ENCODE measurements at regions of chr17 and their contacts with region 1.

Region 1: GRCh38 chr17:39730095-39730921 is at the start of gene MIEN1:
- DNase-seq: peak; percentile 43
- ATAC-seq: peak; percentile 96
- H3K4me3 ChIP-seq: peak within 1 kb of the TSS; percentile 91
- H3K27ac ChIP-seq: peak within 1 kb of the TSS; percentile 88
- H3K4me1 ChIP-seq: peaks cover 3% of the 10 kb centered on the region; the same call in 1 of the 2 replicates
- H3K27me3 ChIP-seq: no peaks in the 10 kb centered on the region
- CTCF ChIP-seq: peak; percentile 71 to 90 (median 85)
- EP300 ChIP-seq: 0 out of 4 replicates have a peak, but pooled peaks of 1 of the 2 experiments have one; percentile 13
- POLR2A ChIP-seq: peak; percentile 98
- RAD21 ChIP-seq: peak; percentile 44
- polyA plus RNA-seq, gene MIEN1: 24.9 to 42.5 TPM

Region 2: GRCh38 chr17:39668199-39668966 is 61.9 kb before region 1 on chr17 and contains the start of gene PNMT:
- CTCF ChIA-PET with region 1: interaction called, 39 read pairs
- POLR2A ChIA-PET with region 1: no interaction called
- RAD21 ChIA-PET with region 1: interaction called, 8 read pairs
- SMC1A ChIA-PET with region 1: interaction called, 3 read pairs
- in situ Hi-C with region 1: no loop called
- intact Hi-C with region 1: no loop called
- DNase-seq: no peak
- ATAC-seq: peak; percentile 82
- H3K4me3 ChIP-seq: peak within 1 kb of the TSS; percentile 44; the same call in 1 of the 2 replicates
- H3K27ac ChIP-seq: no peak within 1 kb of the TSS
- H3K4me1 ChIP-seq: no peaks in the 10 kb centered on the region
- H3K27me3 ChIP-seq: peaks cover 4 to 6% of the 10 kb centered on the region in 2 experiments; a peak in 3 of 4 replicates
- CTCF ChIP-seq: peak; percentile 57 to 73 (median 62)
- EP300 ChIP-seq: no peak
- POLR2A ChIP-seq: no peak
- RAD21 ChIP-seq: 0 out of 2 replicates have a peak, but pooled peaks have one; percentile 17
- polyA plus RNA-seq, gene PNMT: not detected

Region 3: DNA sequence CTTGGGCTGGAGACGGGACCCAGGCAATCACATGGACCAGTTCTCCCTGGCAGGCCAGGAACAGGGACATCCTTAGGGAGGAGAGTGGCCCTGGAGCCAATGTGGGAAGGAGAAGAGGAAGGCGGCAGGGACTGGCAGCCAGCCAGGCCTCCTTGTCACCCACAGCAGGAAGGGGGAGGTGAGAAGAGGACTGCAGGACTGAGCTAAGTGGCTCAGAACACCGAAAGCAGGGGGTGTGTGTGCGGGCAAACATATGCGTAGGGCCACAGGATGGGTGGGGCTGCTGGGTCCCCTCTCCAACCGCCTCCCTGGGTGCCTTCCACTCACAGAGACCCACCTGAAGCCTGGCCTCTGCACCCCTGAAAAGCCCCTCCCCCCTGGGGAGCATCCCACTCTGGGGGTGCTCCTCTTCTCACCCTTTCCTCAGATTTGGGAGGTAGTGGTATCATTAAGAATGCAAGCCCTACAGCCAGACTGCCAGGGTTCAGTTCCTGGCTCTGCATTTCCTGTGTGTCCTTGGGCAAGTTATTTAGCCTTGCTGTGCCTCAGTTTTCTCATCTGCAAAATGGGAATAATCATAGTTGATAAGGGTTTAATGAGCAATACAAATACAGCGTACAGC is 54.0 kb before region 1 on chr17:
- CTCF ChIA-PET with region 1: interaction called, 39 read pairs
- POLR2A ChIA-PET with region 1: interaction called, 6 read pairs
- RAD21 ChIA-PET with region 1: interaction called, 8 read pairs
- SMC1A ChIA-PET with region 1: interaction called, 5 read pairs
- in situ Hi-C with region 1: no loop called
- intact Hi-C with region 1: no loop called
- DNase-seq: peak; percentile 13
- ATAC-seq: peak; percentile 83
- H3K4me3 ChIP-seq: no peak overlapping the region
- H3K27ac ChIP-seq: no peak overlapping the region
- H3K4me1 ChIP-seq: peaks cover 44% of the 10 kb centered on the region
- H3K27me3 ChIP-seq: no peaks in the 10 kb centered on the region
- CTCF ChIP-seq: no peak
- EP300 ChIP-seq: 0 out of 4 replicates have a peak, but pooled peaks of 1 of the 2 experiments have one; percentile 32
- POLR2A ChIP-seq: no peak
- RAD21 ChIP-seq: no peak

Region 4: GRCh38 chr17:39687811-39688518 is 42.3 kb before region 1 on chr17 and contains the start of gene PGAP3:
- CTCF ChIA-PET with region 1: interaction called, 6 read pairs
- POLR2A ChIA-PET with region 1: no interaction called
- RAD21 ChIA-PET with region 1: interaction called, 10 read pairs
- SMC1A ChIA-PET with region 1: interaction called, 6 read pairs
- in situ Hi-C with region 1: no loop called
- intact Hi-C with region 1: no loop called
- DNase-seq: peak; percentile 78
- ATAC-seq: peak; percentile 98
- H3K4me3 ChIP-seq: peak within 1 kb of the TSS; percentile 88
- H3K27ac ChIP-seq: peak within 1 kb of the TSS; percentile 74
- H3K4me1 ChIP-seq: peaks cover 3% of the 10 kb centered on the region; the same call in 1 of the 2 replicates
- H3K27me3 ChIP-seq: no peaks in the 10 kb centered on the region
- CTCF ChIP-seq: peak in 1 of 3 experiments; percentile 10; a peak in 2 of 6 replicates
- EP300 ChIP-seq: no peak
- POLR2A ChIP-seq: peak; percentile 94
- RAD21 ChIP-seq: no peak
- polyA plus RNA-seq, gene PGAP3: 0.21 to 1.2 TPM

Region 5: DNA sequence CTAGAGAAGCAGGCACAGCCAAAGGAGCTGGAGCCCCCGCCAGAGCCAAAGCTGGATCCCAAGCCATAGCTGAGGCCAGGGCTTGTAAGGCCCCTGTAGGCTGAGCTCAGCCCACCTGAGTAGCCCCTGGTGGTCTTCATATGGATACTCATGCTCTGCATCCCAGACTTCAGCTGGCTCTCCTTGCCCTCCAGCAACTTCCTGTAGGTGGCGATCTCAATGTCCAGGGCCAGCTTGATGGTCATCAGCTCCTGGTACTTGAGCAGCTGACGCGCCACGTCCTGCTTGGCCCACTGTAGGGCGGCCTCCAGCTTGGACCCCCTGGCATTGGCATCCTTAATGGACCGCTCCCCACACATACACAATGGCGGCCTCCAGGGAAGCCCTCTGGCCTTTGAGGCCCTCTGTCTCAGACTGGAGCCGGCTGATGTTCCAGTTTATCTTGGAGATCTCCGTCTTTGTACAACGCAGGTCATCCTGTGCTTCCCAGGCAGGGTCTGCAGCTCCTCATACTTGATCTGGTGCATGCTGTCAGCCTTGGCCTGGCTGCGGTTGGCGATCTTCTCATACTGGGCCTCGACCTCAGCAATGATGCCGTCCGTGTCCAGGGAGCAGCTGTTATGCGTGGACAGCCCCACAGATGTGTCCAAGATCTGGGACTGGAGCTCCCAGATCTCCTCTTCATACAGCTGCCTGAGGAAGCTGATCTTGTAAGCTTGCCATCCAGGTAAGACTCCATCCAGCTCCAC is 104.9 kb after region 1 on chr17:
- CTCF ChIA-PET with region 1: no interaction called
- POLR2A ChIA-PET with region 1: no interaction called
- RAD21 ChIA-PET with region 1: no interaction called
- SMC1A ChIA-PET with region 1: no interaction called
- in situ Hi-C with region 1: no loop called
- intact Hi-C with region 1: no loop called
- DNase-seq: no peak
- ATAC-seq: peak; percentile 28
- H3K4me3 ChIP-seq: no peak overlapping the region
- H3K27ac ChIP-seq: no peak overlapping the region
- H3K4me1 ChIP-seq: no peaks in the 10 kb centered on the region; the same call in 1 of the 2 replicates
- H3K27me3 ChIP-seq: no peaks in the 10 kb centered on the region
- CTCF ChIP-seq: no peak
- EP300 ChIP-seq: no peak
- POLR2A ChIP-seq: peak; percentile 45
- RAD21 ChIP-seq: no peak

Region 6: GRCh38 chr17:40177275-40177874 is 447.1 kb after region 1 on chr17 and contains the start of gene RAPGEFL1:
- CTCF ChIA-PET with region 1: no interaction called
- POLR2A ChIA-PET with region 1: no interaction called
- RAD21 ChIA-PET with region 1: no interaction called
- SMC1A ChIA-PET with region 1: no interaction called
- in situ Hi-C with region 1: no loop called
- intact Hi-C with region 1: no loop called
- DNase-seq: peak; percentile 17
- ATAC-seq: peak; percentile 98
- H3K4me3 ChIP-seq: peak within 1 kb of the TSS; percentile 72; the same call in 1 of the 2 replicates
- H3K27ac ChIP-seq: no peak within 1 kb of the TSS
- H3K4me1 ChIP-seq: peaks cover 4% of the 10 kb centered on the region
- H3K27me3 ChIP-seq: no peaks in the 10 kb centered on the region
- CTCF ChIP-seq: no peak
- EP300 ChIP-seq: no peak
- POLR2A ChIP-seq: no peak
- RAD21 ChIP-seq: no peak
- polyA plus RNA-seq, gene RAPGEFL1: 0.13 to 0.38 TPM

Region 7: DNA sequence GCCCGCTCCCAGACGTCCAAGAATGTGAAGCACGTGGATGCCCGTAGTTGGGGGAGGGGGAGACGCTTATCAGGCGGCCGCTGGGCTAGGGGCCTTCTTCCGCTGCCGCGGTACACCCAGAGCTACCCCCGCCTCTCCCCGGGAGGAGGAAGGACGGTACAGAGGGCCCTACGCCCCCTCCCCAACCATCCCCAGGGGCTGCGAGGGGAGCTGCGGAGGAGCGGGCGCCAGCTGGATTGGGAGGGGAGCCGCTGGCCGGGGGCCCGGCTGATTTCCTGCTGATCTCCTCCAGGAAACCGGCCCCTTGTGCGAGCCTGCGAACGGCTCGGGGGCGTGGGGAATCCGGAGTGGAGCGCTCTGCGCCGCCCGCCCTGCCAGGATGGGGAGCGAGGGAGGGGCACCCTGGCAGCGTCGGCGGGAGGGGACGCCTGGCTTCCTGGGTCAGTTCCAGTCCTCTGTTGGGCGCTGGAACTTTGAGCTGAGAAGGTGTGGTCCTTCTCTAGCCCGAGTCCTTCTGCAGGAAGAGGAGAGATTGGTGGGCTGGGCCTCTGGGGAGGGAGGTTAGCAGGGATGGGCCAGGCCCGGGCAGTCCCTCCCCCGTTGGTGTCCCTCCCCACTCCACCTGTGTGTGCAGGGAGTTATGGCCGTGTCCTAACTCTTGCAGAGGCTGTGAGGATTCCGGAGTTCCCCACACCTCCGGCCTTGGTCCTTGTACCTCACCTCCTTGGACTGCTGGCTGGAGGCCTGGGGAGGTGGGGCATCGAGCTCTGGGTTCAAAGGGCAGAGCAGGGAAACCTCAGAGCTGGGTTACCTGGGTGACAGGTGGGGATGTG is 615.1 kb after region 1 on chr17:
- CTCF ChIA-PET with region 1: no interaction called
- POLR2A ChIA-PET with region 1: no interaction called
- RAD21 ChIA-PET with region 1: no interaction called
- SMC1A ChIA-PET with region 1: no interaction called
- in situ Hi-C with region 1: no loop called
- intact Hi-C with region 1: no loop called
- DNase-seq: no peak
- ATAC-seq: no peak
- H3K4me3 ChIP-seq: peak overlapping the region; percentile 8; the same call in 1 of the 2 replicates
- H3K27ac ChIP-seq: no peak overlapping the region; the same call in 1 of the 2 replicates
- H3K4me1 ChIP-seq: peaks cover 43% of the 10 kb centered on the region
- H3K27me3 ChIP-seq: no peaks in the 10 kb centered on the region
- CTCF ChIP-seq: no peak
- EP300 ChIP-seq: no peak
- POLR2A ChIP-seq: no peak
- RAD21 ChIP-seq: no peak